ENCODE measurements at regions of chr12 and their contacts with region 1.

Region 1: GRCh38 chr12:48512855-48513254 is 12.6 kb upstream of the OR8S1 start:
- DNase-seq: peak; percentile 61
- H3K4me3 Mint-ChIP-seq: peak overlapping the region; percentile 6
- H3K27ac Mint-ChIP-seq: peak overlapping the region; percentile 74
- H3K4me1 Mint-ChIP-seq: peaks cover 27% of the 10 kb centered on the region
- H3K27me3 Mint-ChIP-seq: no peaks in the 10 kb centered on the region

Region 2: DNA sequence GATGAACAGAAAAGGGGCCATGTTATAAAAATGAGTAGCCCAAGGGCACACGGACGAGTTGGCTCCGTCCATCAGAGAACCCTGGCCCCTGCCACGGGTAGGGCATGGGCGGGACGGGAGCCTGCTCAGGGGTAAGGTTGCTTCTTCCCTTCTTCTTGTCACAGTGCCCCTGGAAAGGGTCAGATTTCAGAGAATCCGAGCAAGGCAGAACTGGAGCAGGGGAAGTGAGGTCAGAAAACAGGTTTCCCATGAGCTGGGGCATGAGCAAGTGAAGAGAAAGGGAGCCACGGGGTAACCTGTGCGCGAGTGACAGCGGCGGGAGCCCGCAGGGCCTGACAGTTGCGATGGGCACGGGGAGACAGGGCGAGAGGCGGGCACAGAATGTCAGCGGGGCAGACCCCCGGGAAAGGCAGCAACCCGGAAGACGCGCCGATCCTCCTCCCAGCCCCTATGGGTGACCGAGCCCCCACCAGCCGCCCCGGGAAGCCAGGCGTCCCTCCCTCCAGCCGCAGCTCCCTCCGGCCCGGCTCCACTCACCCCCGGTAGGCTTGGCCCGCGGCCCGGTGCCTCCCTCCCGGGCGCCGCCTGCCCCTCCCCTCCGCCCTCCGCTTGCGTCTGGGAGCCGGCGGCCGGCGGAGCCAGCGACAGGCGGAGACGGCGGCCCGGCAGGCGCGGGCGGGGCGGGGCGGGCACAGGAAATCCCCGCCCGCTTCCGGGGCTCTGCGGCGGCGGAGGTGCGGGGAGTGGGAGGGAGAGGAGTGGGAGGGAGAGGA is 162.4 kb before region 1 on chr12 and contains the start of gene ZNF641:
- CTCF ChIA-PET with region 1: no interaction called
- intact Hi-C with region 1: loop called (anchors 2 kb)
- DNase-seq: peak; percentile 79
- H3K4me3 Mint-ChIP-seq: peak within 1 kb of the TSS; percentile 91
- H3K27ac Mint-ChIP-seq: peak within 1 kb of the TSS; percentile 81
- H3K4me1 Mint-ChIP-seq: peaks cover 24% of the 10 kb centered on the region
- H3K27me3 Mint-ChIP-seq: no peaks in the 10 kb centered on the region
- total RNA-seq, gene ZNF641: 3.5 to 6.0 TPM

Region 3: GRCh38 chr12:48446145-48446776 is 66.6 kb before region 1 on chr12:
- CTCF ChIA-PET with region 1: no interaction called
- intact Hi-C with region 1: loop called (anchors 2 kb)
- DNase-seq: peak; percentile 6
- H3K4me3 Mint-ChIP-seq: no peak overlapping the region
- H3K27ac Mint-ChIP-seq: no peak overlapping the region
- H3K4me1 Mint-ChIP-seq: peaks cover 20% of the 10 kb centered on the region
- H3K27me3 Mint-ChIP-seq: no peaks in the 10 kb centered on the region

Region 4: GRCh38 chr12:48489012-48489411 is 23.8 kb before region 1 on chr12:
- CTCF ChIA-PET with region 1: no interaction called
- intact Hi-C with region 1: loop called (anchors 1 kb)
- DNase-seq: no peak
- H3K4me3 Mint-ChIP-seq: no peak overlapping the region
- H3K27ac Mint-ChIP-seq: no peak overlapping the region
- H3K4me1 Mint-ChIP-seq: peaks cover 4% of the 10 kb centered on the region
- H3K27me3 Mint-ChIP-seq: no peaks in the 10 kb centered on the region

Region 5: GRCh38 chr12:48542300-48542928 is 29.6 kb after region 1 on chr12:
- CTCF ChIA-PET with region 1: interaction called, 5 read pairs
- intact Hi-C with region 1: loop called (anchors 1 kb)
- DNase-seq: peak; percentile 83
- H3K4me3 Mint-ChIP-seq: no peak overlapping the region
- H3K27ac Mint-ChIP-seq: no peak overlapping the region
- H3K4me1 Mint-ChIP-seq: peaks cover 14% of the 10 kb centered on the region
- H3K27me3 Mint-ChIP-seq: no peaks in the 10 kb centered on the region